Aorta (tissue), 5 donors: ENCODE measurements at regions of chr19 and their contacts with region 1.

Region 1: GRCh38 chr19:12847159-12848139 is 9.1 kb downstream of the MAST1 start:
- DNase-seq: peak; percentile 90 to 96
- ATAC-seq: peak; percentile 94
- H3K4me3 ChIP-seq: no peak overlapping the region
- H3K27ac ChIP-seq: no peak overlapping the region
- H3K4me1 ChIP-seq: no peaks in the 10 kb centered on the region
- H3K27me3 ChIP-seq: no peaks in the 10 kb centered on the region

Region 2: GRCh38 chr19:12666265-12667048 is 181.0 kb before region 1 on chr19 and contains the starts of genes MAN2B1 and WDR83:
- intact Hi-C with region 1: loop called (anchors 10 kb)
- DNase-seq: peak; percentile 82 to 91
- ATAC-seq: peak; percentile 88
- H3K4me3 ChIP-seq: peak within 1 kb of the TSS; percentile 44 to 68
- H3K27ac ChIP-seq: no peak within 1 kb of the TSS
- H3K4me1 ChIP-seq: no peaks in the 10 kb centered on the region
- H3K27me3 ChIP-seq: no peaks in the 10 kb centered on the region
- total RNA-seq, gene MAN2B1: 74.8 to 111 TPM
- total RNA-seq, gene WDR83: 7.1 to 11.8 TPM

Region 3: DNA sequence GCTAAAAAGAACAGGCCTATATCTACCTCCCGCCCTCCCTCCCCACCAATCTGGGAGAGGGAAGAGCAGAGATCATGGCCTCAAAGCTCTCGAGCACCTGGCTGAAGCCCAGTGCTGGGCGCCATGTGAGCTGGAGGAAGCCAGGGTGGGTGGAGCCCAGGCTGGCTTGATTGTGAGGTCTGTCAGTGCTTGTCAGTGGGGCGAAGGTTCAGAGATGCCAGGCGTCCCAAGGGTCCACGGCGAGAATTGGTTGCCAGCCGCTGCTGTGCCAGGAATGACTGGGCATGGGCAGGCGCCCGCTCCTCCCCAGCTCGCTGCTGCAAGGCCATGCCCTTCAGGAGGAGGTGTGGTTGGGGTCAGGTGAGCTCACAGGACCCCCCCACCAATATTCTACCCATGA is 84.3 kb before region 1 on chr19:
- intact Hi-C with region 1: loop called (anchors 1 to 2 kb)
- DNase-seq: no peak
- ATAC-seq: no peak
- H3K4me3 ChIP-seq: no peak overlapping the region
- H3K27ac ChIP-seq: no peak overlapping the region
- H3K4me1 ChIP-seq: no peaks in the 10 kb centered on the region
- H3K27me3 ChIP-seq: no peaks in the 10 kb centered on the region

Region 4: DNA sequence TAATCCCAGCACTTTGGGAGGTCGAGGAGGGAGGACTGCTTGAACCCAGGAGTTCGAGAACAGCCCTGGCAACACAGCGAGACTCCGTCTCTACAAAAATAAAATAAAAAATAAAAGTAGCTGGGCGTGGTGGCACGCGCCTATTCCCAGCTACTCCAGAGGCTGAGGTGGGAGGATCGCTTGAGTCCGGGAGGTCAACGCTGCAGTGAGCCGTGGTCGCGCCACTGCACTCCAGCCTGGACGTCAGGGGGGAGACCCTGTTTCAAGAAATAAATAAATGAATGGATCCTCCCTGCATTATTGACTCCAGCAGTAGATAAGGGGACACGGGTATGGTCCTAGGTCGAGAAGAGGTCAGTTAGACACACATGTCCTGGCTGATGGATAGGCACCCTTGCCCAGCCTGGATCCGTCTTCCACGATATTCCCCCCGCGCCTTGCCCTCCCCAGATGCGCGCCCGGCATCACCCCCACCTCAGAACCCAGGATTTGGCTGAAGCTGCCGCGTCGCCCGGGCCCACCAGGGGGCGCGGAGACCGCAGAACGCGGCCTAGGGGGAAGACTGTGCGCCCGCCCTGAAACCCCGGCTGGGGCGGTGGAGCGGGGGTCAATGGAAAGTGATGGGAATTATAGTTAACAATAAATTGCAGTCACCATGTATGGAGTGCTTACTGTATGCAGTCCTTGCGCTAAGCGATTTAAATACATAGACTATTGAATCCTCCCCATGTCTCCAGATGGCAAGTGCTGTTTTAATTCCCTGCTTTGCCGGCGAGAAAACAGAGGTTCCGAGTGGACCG is 70.0 kb before region 1 on chr19:
- intact Hi-C with region 1: loop called in 1 of 2 experiments (anchors 5 kb)
- DNase-seq: peak; percentile 89 to 95
- ATAC-seq: peak; percentile 85
- H3K4me3 ChIP-seq: peak overlapping the region; percentile 19 to 55
- H3K27ac ChIP-seq: peak overlapping the region; percentile 83 to 84
- H3K4me1 ChIP-seq: no peaks in the 10 kb centered on the region
- H3K27me3 ChIP-seq: no peaks in the 10 kb centered on the region